GM18951 (cell line): ENCODE measurements at regions of chr14 and their contacts with region 1.

Region 1: GRCh38 chr14:69606258-69607184 is 4.9 kb upstream of the SUSD6 start:
- POLR2A ChIP-seq: no peak

Region 2: DNA sequence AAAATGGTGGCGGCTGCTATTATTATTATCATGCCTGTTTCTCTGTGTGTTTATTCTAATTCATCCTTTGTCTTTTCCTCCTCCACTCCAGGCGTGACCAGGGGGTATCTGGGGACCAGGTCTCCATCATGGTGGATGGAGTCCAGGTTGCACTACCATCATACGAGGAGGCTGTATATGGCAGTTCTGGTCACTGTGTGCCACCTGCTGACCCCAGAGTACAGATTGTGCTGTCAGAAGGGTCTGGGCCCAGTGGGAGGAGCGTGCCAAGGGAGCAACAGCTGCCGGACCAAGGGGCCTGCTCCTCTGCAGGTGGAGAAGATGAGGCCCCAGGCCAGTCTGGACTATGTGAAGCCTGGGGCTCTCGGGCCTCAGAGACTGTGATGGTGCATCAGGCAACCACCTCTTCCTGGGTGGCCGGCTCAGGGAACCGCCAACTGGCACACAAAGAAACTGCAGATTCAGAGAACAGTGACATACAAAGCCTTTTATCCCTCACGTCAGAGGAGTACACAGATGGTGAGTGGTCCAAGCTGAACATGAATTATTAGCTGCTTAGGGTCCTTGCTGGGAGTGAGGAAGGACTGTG is 102.2 kb after region 1 on chr14:
- in situ Hi-C with region 1: loop called (anchors 10 kb)
- POLR2A ChIP-seq: no peak

Region 3: GRCh38 chr14:69980457-69981425 is 374.2 kb after region 1 on chr14:
- in situ Hi-C with region 1: no loop called
- POLR2A ChIP-seq: no peak